MCF 10A (cell line): ENCODE measurements at regions of chr7 and their contacts with region 1.

Region 1: DNA sequence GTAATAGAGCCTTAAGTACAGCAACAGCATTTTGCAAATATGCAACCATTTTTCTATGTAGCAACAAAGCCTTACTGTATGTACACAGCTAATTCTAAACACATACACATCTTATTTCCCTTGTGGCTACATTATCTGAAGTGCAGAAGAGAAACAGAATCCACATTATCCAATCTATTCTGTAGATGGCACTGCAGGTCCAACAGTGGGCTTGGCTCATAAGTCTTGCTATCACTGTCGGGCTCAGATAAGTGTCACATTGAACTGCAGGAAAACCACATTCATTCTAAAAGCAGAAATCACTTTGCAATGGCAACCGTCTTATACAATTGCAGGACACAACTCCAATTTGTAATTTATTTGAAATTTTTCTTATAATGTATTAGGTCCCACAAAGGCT is 109.8 kb upstream of the NOBOX start:
- DNase-seq: peak; percentile 49
- H3K4me3 Mint-ChIP-seq: no peak overlapping the region
- H3K27ac Mint-ChIP-seq: no peak overlapping the region
- H3K4me1 Mint-ChIP-seq: no peaks in the 10 kb centered on the region
- H3K27me3 Mint-ChIP-seq: no peaks in the 10 kb centered on the region
- CTCF ChIP-seq: peak; percentile 47

Region 2: GRCh38 chr7:144497282-144497681 is 16.1 kb before region 1 on chr7:
- CTCF ChIA-PET with region 1: no interaction called
- POLR2A ChIA-PET with region 1: no interaction called
- intact Hi-C with region 1: no loop called
- DNase-seq: no peak
- H3K4me3 Mint-ChIP-seq: no peak overlapping the region
- H3K27ac Mint-ChIP-seq: no peak overlapping the region
- H3K4me1 Mint-ChIP-seq: no peaks in the 10 kb centered on the region
- H3K27me3 Mint-ChIP-seq: no peaks in the 10 kb centered on the region
- CTCF ChIP-seq: no peak

Region 3: DNA sequence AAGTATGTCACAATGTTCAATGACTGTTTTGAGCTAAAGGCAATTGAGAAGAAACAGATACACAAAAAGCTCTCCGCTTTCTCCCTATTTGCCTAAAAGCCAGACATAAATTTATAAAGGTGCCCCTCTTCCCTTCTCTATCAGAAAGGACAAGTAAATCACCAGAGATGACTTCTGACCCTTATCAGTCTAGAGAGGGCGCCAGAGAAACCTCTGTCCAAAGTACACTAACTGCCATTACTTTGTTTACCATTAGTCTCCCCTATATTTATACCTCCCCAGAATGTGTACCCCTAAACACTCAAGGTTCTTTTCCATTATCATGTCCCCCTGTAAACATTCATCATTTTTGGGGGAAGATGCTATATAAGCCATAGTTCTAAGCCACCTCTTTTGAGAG is 273.2 kb after region 1 on chr7:
- CTCF ChIA-PET with region 1: interaction called, 9 read pairs
- POLR2A ChIA-PET with region 1: no interaction called
- intact Hi-C with region 1: loop called (anchors 1 kb)
- DNase-seq: peak; percentile 23
- H3K4me3 Mint-ChIP-seq: no peak overlapping the region
- H3K27ac Mint-ChIP-seq: no peak overlapping the region
- H3K4me1 Mint-ChIP-seq: no peaks in the 10 kb centered on the region
- H3K27me3 Mint-ChIP-seq: no peaks in the 10 kb centered on the region
- CTCF ChIP-seq: no peak

Region 4: DNA sequence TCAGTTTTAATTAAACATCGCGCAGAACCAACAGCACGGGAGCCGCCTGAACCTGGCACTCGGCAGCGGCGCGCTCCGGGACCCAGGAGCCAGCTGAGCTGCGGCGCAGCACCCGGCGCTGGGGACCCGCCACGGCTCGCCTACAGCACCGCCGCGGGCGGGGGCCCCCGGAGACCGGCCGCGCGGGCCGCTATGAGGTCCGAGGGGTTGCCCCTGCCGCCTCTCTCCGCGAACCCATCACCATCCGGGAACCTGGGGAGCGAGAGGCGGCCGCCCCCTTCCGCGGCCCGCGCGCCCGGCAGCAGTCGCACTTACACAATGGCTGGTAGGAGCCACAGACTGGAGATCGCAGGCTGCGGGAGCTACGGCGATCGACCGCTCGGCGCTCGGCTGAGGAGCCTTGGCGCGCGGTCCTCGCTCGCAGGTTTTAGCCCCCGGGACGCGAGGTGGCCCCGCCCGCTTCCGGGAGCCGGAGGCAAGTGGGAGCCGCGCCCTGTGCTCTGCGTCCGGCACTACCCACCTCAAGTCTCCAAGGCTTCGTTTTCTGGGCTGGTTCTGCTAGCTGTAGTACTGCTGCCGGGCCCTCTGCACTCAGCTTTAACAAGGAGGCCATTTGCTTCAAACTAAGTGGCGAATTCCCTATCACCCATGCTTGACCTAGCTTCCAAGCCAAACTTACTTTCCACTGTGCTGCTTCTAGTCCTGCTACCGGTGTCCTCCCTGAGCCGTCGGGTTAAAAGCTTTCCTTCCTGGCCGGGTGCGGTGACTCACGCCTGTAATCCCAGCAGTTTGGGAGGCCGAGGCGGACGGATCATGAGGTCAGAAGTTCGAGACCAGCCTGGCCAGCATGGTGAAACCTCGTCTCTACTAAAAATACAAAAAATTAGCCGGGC is 322.6 kb after region 1 on chr7 and contains the start of gene TPK1:
- CTCF ChIA-PET with region 1: no interaction called
- POLR2A ChIA-PET with region 1: no interaction called
- intact Hi-C with region 1: loop called (anchors 5 kb)
- DNase-seq: peak; percentile 91
- H3K4me3 Mint-ChIP-seq: peak within 1 kb of the TSS; percentile 98
- H3K27ac Mint-ChIP-seq: peak within 1 kb of the TSS; percentile 95
- H3K4me1 Mint-ChIP-seq: peaks cover under 1% of the 10 kb centered on the region
- H3K27me3 Mint-ChIP-seq: no peaks in the 10 kb centered on the region
- CTCF ChIP-seq: no peak
- total RNA-seq, gene TPK1: 8.8 TPM in 2 replicates